Esophagus muscularis mucosa (tissue), 4 donors: ENCODE measurements at regions of chr15 and their contacts with region 1.

Region 1: GRCh38 chr15:57611938-57612337 is 20.2 kb downstream of the MYZAP start:
- DNase-seq: no peak
- H3K4me3 ChIP-seq: no peak overlapping the region
- H3K27ac ChIP-seq: peak overlapping the region; percentile 83 to 86 (median 84)
- H3K4me1 ChIP-seq: peaks cover 58 to 92% (median 71%) of the 10 kb centered on the region in 4 donors
- H3K27me3 ChIP-seq: no peaks in the 10 kb centered on the region
- CTCF ChIP-seq: peak; percentile 56 to 73 (median 70)
- EP300 ChIP-seq: no peak
- POLR2A ChIP-seq: no peak

Region 2: GRCh38 chr15:57561041-57561711 is 50.8 kb before region 1 on chr15:
- intact Hi-C with region 1: loop called (anchors 2 kb)
- DNase-seq: no peak
- H3K4me3 ChIP-seq: no peak overlapping the region
- H3K27ac ChIP-seq: peak overlapping the region in 3 of 4 donors; percentile 53 to 63 (median 54)
- H3K4me1 ChIP-seq: peaks cover 16 to 30% (median 21%) of the 10 kb centered on the region in 4 donors
- H3K27me3 ChIP-seq: no peaks in the 10 kb centered on the region
- CTCF ChIP-seq: peak; percentile 90 to 96 (median 95)
- EP300 ChIP-seq: no peak
- POLR2A ChIP-seq: no peak

Region 3: GRCh38 chr15:57820119-57820518 is 208.2 kb after region 1 on chr15:
- intact Hi-C with region 1: no loop called
- DNase-seq: no peak
- H3K4me3 ChIP-seq: no peak overlapping the region
- H3K27ac ChIP-seq: no peak overlapping the region
- H3K4me1 ChIP-seq: no peaks in the 10 kb centered on the region
- H3K27me3 ChIP-seq: peaks cover 0 to 5% (median 0%) of the 10 kb centered on the region in 4 donors
- CTCF ChIP-seq: no peak
- EP300 ChIP-seq: no peak
- POLR2A ChIP-seq: no peak